CD8-positive, alpha-beta T cell (primary cell): ENCODE measurements at regions of chr2 and their contacts with region 1.

Region 1: DNA sequence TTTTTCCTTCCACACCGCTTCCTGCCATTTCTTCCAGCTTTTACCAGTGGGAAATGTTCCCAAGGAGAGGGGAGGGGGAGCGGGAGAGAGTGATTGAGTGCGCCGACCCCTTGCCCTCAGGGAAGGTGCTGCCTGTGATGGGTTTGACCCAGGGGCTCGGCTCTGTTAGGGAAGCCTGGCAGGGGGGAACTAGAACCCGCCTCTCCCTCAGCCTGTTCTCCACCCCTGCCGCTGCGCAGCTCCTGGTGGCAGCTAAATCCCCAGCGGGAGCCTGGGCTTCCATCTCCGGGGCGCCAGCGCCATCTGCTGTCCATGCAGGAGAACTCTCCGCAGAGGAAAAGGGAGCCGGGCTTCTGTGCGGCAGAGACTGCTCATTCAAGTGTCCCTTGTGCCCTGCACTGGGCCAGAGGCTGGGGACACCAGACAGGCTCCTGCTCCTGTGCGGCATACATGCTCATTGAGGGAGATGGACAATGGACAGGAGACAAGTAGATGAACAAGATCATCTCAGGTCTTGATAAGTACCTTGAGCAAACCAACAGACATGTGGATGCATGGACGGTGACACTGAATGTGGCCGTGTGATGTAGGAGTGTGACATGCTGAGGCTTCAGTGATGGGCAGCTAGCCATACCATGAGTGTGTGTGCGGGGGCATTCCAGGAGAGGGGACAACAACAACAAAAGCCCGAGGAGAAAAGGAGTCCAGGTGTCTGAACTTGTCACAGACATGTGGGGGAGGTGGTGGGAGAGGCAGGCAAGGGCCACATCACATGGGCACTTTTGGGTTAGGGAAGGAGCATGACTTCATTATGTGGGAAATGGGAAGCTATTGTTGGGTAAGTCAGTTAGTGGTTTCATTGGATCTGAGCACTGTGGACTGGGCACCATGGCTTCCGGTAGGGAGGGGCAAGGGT is 13.3 kb downstream of the CHPF start:
- DNase-seq: peak; percentile 73 to 92 (median 85)
- ATAC-seq: peak; percentile 98
- H3K4me3 ChIP-seq: no peak overlapping the region
- H3K4me3 Mint-ChIP-seq: no peak overlapping the region
- H3K27ac ChIP-seq: no peak overlapping the region
- H3K27ac Mint-ChIP-seq: no peak overlapping the region
- H3K4me1 ChIP-seq: no peaks in the 10 kb centered on the region
- H3K4me1 Mint-ChIP-seq: peaks cover 3% of the 10 kb centered on the region
- H3K27me3 ChIP-seq: peaks cover 6 to 9% of the 10 kb centered on the region in 2 experiments
- H3K27me3 Mint-ChIP-seq: peaks cover 67% of the 10 kb centered on the region
- CTCF ChIP-seq: peak; percentile 98

Region 2: GRCh38 chr2:219402665-219403515 is 127.4 kb before region 1 on chr2:
- CTCF ChIA-PET with region 1: interaction called, 221 read pairs
- POLR2A ChIA-PET with region 1: interaction called, 3 read pairs
- intact Hi-C with region 1: loop called (anchors 1 kb)
- DNase-seq: peak; percentile 18 to 77 (median 62)
- ATAC-seq: peak; percentile 99
- H3K4me3 ChIP-seq: no peak overlapping the region
- H3K4me3 Mint-ChIP-seq: no peak overlapping the region
- H3K27ac ChIP-seq: no peak overlapping the region
- H3K27ac Mint-ChIP-seq: no peak overlapping the region
- H3K4me1 ChIP-seq: peaks cover under 1% of the 10 kb centered on the region
- H3K4me1 Mint-ChIP-seq: peaks cover 4% of the 10 kb centered on the region
- H3K27me3 ChIP-seq: no peaks in the 10 kb centered on the region
- H3K27me3 Mint-ChIP-seq: no peaks in the 10 kb centered on the region
- CTCF ChIP-seq: peak; percentile 80

Region 3: GRCh38 chr2:219459460-219460311 is 70.6 kb before region 1 on chr2:
- CTCF ChIA-PET with region 1: interaction called, 76 read pairs
- POLR2A ChIA-PET with region 1: no interaction called
- intact Hi-C with region 1: loop called (anchors 1 kb)
- DNase-seq: peak in 7 of 9 experiments; percentile 16 to 62 (median 45)
- ATAC-seq: peak; percentile 59
- H3K4me3 ChIP-seq: no peak overlapping the region
- H3K4me3 Mint-ChIP-seq: no peak overlapping the region
- H3K27ac ChIP-seq: no peak overlapping the region
- H3K27ac Mint-ChIP-seq: no peak overlapping the region
- H3K4me1 ChIP-seq: no peaks in the 10 kb centered on the region
- H3K4me1 Mint-ChIP-seq: peaks cover 9% of the 10 kb centered on the region
- H3K27me3 ChIP-seq: no peaks in the 10 kb centered on the region
- H3K27me3 Mint-ChIP-seq: no peaks in the 10 kb centered on the region
- CTCF ChIP-seq: peak; percentile 77

Region 4: DNA sequence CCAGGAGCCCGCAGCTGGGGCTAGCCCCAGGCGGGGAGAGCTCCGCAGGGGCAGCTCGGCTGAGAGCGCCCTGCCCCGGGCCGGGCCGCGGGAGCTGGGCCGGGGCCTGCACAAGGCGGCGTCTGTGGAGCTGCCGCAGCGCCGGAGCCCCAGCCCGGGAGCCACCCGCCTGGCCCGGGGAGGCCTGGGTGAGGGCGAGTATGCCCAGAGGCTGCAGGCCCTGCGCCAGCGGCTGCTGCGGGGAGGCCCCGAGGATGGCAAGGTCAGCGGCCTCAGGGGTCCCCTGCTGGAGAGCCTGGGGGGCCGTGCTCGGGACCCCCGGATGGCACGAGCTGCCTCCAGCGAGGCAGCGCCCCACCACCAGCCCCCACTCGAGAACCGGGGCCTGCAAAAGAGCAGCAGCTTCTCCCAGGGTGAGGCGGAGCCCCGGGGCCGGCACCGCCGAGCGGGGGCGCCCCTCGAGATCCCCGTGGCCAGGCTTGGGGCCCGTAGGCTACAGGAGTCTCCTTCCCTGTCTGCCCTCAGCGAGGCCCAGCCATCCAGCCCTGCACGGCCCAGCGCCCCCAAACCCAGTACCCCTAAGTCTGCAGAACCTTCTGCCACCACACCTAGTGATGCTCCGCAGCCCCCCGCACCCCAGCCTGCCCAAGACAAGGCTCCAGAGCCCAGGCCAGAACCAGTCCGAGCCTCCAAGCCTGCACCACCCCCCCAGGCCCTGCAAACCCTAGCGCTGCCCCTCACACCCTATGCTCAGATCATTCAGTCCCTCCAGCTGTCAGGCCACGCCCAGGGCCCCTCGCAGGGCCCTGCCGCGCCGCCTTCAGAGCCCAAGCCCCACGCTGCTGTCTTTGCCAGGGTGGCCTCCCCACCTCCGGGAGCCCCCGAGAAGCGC is 46.6 kb before region 1 on chr2:
- CTCF ChIA-PET with region 1: interaction called, 151 read pairs
- POLR2A ChIA-PET with region 1: no interaction called
- intact Hi-C with region 1: no loop called
- DNase-seq: no peak
- ATAC-seq: peak; percentile 45
- H3K4me3 ChIP-seq: peak overlapping the region in 1 of 2 experiments; percentile 45
- H3K4me3 Mint-ChIP-seq: peak overlapping the region; percentile 70
- H3K27ac ChIP-seq: no peak overlapping the region
- H3K27ac Mint-ChIP-seq: no peak overlapping the region
- H3K4me1 ChIP-seq: peaks cover 7% of the 10 kb centered on the region
- H3K4me1 Mint-ChIP-seq: peaks cover 3% of the 10 kb centered on the region
- H3K27me3 ChIP-seq: peaks cover 12 to 24% of the 10 kb centered on the region in 2 experiments
- H3K27me3 Mint-ChIP-seq: peaks cover 50% of the 10 kb centered on the region
- CTCF ChIP-seq: no peak

Region 5: DNA sequence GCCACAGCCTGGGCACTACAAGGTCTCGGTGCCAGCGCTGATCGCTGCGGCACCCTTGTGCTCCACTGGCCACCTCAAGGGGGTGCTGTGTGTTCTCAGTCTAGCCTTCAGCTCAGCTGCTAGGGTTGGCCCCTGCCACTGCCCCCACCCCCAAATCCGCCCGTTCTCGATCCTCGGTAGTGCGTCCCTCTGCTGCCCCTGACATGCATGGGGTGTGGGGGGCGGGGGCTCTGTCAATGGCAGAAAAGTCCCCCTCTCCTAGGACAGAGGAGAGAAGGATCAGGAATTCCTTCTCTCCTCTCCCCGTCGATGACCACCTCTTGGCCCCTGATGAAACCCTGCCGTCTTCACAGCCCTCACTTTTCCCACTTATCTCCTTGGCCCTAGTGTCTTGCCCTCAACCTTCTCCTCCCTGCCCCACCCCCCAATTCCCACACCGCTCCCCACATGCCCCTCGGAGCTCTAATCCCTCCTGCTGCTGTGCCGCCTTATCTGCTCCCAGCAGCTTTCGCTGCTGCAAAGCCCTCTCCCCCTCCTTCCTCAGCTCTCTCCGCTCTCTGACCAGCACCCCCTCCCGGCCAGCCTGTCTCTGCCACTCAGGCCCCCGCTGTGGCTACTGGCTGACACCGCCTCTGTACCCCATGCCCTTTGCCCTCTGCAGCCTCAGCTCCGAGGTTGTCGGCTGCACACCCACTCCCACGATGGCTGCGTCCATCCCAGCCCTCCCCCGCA is 20.4 kb before region 1 on chr2:
- CTCF ChIA-PET with region 1: interaction called, 82 read pairs
- POLR2A ChIA-PET with region 1: interaction called, 3 read pairs
- intact Hi-C with region 1: no loop called
- DNase-seq: peak in 8 of 9 experiments; percentile 25 to 68 (median 54)
- ATAC-seq: peak; percentile 90
- H3K4me3 ChIP-seq: no peak overlapping the region
- H3K4me3 Mint-ChIP-seq: peak overlapping the region; percentile 26
- H3K27ac ChIP-seq: no peak overlapping the region
- H3K27ac Mint-ChIP-seq: no peak overlapping the region
- H3K4me1 ChIP-seq: peaks cover 26% of the 10 kb centered on the region
- H3K4me1 Mint-ChIP-seq: peaks cover 25% of the 10 kb centered on the region
- H3K27me3 ChIP-seq: peaks cover 22 to 35% of the 10 kb centered on the region in 2 experiments
- H3K27me3 Mint-ChIP-seq: peaks cover 53% of the 10 kb centered on the region
- CTCF ChIP-seq: peak; percentile 53

Region 6: DNA sequence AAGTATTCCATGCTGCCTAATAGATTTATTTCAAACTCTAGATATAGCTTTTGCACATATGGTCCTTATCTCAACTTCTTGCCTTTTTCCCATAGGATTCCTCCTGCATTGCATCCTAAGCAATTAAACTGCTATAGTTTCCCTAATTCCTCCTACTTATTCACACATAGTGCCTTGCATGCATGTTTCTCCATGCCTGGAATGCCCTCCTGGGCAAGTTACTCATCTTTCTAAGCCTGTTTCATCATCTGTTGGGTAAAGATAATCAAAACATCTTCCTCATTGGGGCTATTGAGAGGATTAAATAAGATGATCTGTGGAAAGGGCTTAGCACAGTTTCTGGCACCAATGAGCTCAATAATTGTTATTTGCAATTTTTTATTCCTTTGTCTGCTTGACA is 823.6 kb after region 1 on chr2:
- CTCF ChIA-PET with region 1: no interaction called
- POLR2A ChIA-PET with region 1: no interaction called
- intact Hi-C with region 1: no loop called
- DNase-seq: no peak
- ATAC-seq: no peak
- H3K4me3 ChIP-seq: no peak overlapping the region
- H3K4me3 Mint-ChIP-seq: no peak overlapping the region
- H3K27ac ChIP-seq: no peak overlapping the region
- H3K27ac Mint-ChIP-seq: no peak overlapping the region
- H3K4me1 ChIP-seq: no peaks in the 10 kb centered on the region
- H3K4me1 Mint-ChIP-seq: no peaks in the 10 kb centered on the region
- H3K27me3 ChIP-seq: no peaks in the 10 kb centered on the region
- H3K27me3 Mint-ChIP-seq: no peaks in the 10 kb centered on the region
- CTCF ChIP-seq: no peak